GM10248 (cell line): ENCODE measurements at regions of chr16 and their contacts with region 1.

Region 1: GRCh38 chr16:89615596-89616090 is 2.2 kb downstream of the DPEP1 start:
- DNase-seq: peak; percentile 70
- CTCF ChIP-seq: peak; percentile 67

Region 2: DNA sequence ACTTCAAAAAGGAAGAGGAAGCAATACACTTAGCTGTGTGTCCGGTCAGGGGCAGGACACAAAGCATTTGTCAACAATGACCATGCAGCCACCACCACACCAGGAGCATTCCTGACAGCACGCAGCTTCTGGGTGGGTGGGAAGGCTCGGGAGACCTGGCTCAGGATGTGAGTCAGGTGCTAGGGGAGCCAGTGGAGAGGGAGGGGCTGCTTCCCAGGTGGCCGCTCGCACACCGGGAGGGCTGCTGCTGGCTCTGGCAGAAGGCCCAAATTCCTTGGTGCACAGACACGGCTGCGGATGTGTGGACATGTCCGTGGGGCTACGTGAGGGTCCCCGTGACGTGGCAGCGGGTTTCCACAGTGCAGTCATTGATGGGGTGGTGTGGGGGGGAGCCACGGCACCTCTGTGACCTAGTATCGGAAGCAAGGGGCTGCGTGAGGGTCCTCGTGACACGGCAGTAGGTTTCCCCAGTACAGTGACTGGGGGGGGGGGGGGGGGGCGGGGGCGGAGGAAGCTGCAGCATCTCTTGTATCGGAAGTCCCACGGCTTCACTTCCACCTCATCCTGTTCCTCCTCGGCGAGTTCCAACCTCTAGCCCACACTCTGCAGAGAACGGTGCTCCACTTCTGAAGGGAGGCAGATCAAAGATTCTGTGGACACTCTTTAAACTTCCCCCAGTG is 285.3 kb before region 1 on chr16:
- CTCF ChIA-PET with region 1: no interaction called
- POLR2A ChIA-PET with region 1: no interaction called
- DNase-seq: no peak
- CTCF ChIP-seq: no peak

Region 3: GRCh38 chr16:89361751-89362539 is 253.7 kb before region 1 on chr16:
- CTCF ChIA-PET with region 1: no interaction called
- POLR2A ChIA-PET with region 1: no interaction called
- DNase-seq: peak; percentile 75
- CTCF ChIP-seq: no peak

Region 4: DNA sequence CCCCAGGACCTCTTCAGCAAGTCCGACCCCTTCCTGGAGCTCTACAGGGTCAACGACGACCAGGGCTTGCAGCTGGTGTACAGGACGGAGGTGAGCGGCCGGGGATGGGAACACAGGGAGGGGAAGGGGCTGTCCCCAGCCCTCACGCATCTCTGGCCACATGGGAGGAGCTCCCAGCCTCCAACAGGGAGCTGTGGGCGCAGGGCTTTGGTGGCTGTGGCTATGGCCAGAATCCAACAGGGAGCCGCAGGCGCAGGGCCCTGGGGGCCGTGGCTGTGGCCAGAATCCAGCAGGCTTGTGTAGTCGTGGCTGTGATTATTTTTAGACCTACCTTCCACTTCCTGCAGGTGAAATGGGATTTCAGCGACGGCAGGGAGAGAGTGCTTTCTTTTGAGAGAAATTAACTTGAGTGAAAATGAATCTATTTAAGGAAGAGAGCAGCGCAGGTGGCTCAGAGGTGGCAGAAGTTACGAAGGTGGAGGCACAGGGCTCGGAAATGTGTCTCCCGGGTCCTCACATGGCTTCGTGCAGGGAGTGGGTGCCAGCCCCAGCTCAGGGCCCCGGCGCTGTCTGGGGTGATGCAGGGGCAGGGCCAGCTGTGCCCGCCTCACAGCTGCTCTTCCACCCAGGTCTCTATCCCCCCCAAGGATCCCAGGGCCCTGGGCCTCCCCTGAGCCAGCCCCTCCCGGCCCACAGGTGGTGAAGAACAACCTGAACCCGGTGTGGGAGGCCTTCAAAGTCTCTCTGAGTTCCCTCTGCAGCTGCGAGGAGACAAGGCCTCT is 30.7 kb before region 1 on chr16:
- CTCF ChIA-PET with region 1: no interaction called
- POLR2A ChIA-PET with region 1: no interaction called
- DNase-seq: no peak
- CTCF ChIP-seq: no peak

Region 5: GRCh38 chr16:89602273-89602951 is 13.2 kb before region 1 on chr16:
- CTCF ChIA-PET with region 1: interaction called, 18 read pairs
- POLR2A ChIA-PET with region 1: interaction called, 4 read pairs
- DNase-seq: peak; percentile 72
- CTCF ChIP-seq: no peak

Region 6: GRCh38 chr16:89633064-89633631 is 17.5 kb after region 1 on chr16:
- CTCF ChIA-PET with region 1: interaction called, 15 read pairs
- POLR2A ChIA-PET with region 1: no interaction called
- DNase-seq: no peak
- CTCF ChIP-seq: no peak

Region 7: DNA sequence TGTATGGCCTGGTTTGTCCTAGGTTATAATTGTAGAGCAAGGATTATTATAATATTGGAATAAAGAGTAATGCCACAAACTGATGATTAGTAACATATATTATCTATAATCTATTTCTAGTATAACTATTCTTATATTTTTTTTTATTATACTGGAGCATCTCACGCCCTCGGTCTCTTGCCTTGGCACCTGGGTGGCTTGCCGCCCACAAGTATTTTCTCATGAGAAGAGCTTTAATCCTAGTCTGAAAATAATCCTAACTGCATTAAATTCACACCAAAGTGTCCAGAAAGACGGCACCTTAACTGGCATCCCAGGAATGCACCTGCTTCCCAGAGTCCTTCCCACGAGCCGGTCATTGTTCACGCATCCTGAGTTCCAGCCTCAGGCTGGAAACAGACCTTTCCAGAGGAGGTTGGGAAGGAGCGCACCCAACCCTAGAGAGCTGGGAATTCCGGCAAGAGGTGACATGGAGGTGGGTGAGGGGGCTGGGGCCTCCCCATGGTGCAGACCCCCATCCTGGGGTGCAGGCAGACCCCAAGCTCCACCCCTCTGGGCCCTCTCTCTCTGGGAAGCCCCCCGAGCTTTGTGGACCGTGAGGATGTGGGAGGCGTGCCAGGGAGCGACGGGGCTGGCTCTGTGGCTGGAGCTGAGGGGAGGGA is 25.9 kb after region 1 on chr16:
- CTCF ChIA-PET with region 1: interaction called, 29 read pairs
- POLR2A ChIA-PET with region 1: no interaction called
- DNase-seq: no peak
- CTCF ChIP-seq: no peak

Region 8: GRCh38 chr16:89759746-89760340 is 144.2 kb after region 1 on chr16:
- CTCF ChIA-PET with region 1: no interaction called
- POLR2A ChIA-PET with region 1: no interaction called
- DNase-seq: no peak
- CTCF ChIP-seq: no peak